HepG2 (cell line): ENCODE measurements at regions of chr11 and their contacts with region 1.

Region 1: GRCh38 chr11:67658691-67659271 is 8.3 kb upstream of the ACY3 start:
- DNase-seq: no peak
- ATAC-seq: no peak
- H3K4me3 ChIP-seq: no peak overlapping the region
- H3K27ac ChIP-seq: no peak overlapping the region
- H3K4me1 ChIP-seq: peaks cover 20% of the 10 kb centered on the region
- H3K27me3 ChIP-seq: peaks cover 0 to 11% of the 10 kb centered on the region in 2 experiments; a peak in 2 of 5 replicates
- CTCF ChIP-seq: no peak
- EP300 ChIP-seq: no peak
- POLR2A ChIP-seq: no peak
- RAD21 ChIP-seq: no peak

Region 2: DNA sequence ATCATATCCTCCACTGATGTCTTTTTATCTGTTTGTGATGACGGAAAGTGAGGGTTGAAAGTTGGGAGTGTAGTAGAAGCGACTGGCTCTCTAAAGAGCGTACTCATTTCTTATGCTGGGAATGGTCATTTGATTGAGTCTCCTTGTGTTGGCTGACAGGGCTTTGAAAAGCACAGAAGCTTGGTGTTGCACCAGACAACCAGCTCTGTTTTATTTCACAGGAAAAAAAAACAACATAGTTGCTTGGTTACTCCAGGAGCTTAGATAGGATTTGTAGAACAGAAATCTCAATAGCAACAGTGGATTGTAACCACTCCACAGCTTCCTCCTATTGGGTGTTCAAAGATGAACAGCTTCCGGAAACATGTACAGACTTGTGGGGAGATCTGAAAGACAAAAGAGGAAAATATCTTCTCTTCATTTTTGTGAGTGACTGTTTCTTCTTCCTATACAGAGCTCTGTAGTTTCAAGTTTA is 1039.7 kb before region 1 on chr11:
- CTCF ChIA-PET with region 1: no interaction called
- POLR2A ChIA-PET with region 1: no interaction called
- in situ Hi-C with region 1: no loop called
- intact Hi-C with region 1: no loop called
- DNase-seq: no peak
- ATAC-seq: no peak
- H3K4me3 ChIP-seq: peak overlapping the region; percentile 89 to 93 (median 92); a peak in 5 of 6 replicates
- H3K27ac ChIP-seq: peak overlapping the region; percentile 89
- H3K4me1 ChIP-seq: peaks cover 66% of the 10 kb centered on the region
- H3K27me3 ChIP-seq: no peaks in the 10 kb centered on the region; a peak in 1 of 5 replicates
- CTCF ChIP-seq: no peak
- EP300 ChIP-seq: no peak
- POLR2A ChIP-seq: peak in 1 of 2 experiments; percentile 48; a peak in 1 of 4 replicates
- RAD21 ChIP-seq: no peak

Region 3: DNA sequence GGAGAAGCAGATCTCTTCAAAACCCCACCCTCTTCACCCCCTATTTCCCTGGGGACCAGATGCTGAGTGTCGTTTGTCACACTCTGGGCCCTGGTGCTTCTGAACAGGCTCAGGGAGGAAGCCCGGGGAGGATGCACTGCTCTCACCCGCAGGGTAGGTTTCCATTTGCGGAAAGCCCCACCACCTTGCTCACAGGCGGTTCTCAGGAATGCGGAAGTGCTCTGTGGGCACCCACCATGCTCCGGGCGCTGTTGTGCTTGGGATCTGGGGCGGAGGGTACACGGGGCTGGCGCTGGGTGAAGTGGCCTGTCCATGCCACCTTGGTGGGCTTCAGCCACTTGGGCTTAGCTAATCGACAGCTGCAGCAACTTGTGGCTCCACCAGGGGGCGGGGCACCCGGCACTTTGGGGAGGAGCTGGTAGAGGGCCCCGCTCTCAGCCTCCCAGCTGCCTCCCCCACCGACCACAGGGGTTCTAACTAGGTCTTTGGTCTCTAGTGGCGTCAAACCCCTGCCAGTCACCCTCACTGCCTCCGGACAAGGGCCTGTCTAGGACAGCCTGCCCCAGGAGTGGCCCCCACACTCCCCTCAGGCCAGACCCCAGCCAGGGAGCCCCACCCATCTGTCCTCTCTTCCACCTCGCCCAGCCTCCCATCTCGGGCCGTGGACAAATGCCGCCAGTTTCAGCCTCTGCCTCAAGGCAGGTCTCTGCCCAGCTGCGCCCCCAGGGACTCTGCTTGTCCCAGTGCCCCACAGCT is 44.6 kb before region 1 on chr11:
- CTCF ChIA-PET with region 1: interaction called, 20 read pairs
- POLR2A ChIA-PET with region 1: no interaction called
- in situ Hi-C with region 1: no loop called
- intact Hi-C with region 1: loop called (anchors 1 kb)
- DNase-seq: no peak
- ATAC-seq: peak; percentile 59
- H3K4me3 ChIP-seq: no peak overlapping the region
- H3K27ac ChIP-seq: peak overlapping the region; percentile 28
- H3K4me1 ChIP-seq: peaks cover 45% of the 10 kb centered on the region
- H3K27me3 ChIP-seq: no peaks in the 10 kb centered on the region
- CTCF ChIP-seq: peak; percentile 80
- EP300 ChIP-seq: no peak
- POLR2A ChIP-seq: no peak
- RAD21 ChIP-seq: peak; percentile 64

Region 4: DNA sequence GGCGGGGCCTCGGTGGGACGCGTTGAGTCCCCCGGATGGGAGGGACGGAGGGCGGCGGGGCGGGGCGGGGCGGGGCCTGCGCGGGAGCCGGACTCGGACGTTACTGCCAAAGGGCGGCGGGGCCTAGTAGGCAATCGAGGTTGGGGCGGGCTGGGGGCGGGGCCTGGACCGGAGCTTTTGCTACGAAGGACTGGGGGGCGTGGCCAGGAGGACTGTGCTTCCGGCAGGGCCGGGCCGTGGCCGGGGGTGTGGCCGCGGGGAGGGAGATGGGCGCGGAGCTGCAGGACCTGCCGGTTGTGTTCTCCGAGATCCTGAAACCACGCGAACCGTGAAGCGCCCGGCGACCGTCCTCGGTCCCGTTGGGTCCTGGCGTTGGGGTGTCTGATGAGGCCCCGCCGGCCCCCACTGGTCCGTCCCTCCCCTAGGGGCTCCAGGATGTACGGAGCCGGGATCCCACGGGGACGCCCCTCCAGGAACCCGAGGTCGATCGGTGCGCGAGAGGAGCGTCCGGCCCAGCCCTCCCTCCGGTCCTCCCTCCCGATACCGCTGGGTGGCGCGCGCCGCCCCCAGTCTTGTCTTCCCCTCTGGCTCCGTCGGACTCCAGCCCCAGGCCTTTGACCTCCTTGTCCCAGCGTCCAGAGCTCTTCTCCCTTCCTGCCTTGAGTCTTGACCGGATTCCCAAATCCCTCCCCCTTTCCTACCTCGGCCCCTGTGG is 28.4 kb before region 1 on chr11:
- CTCF ChIA-PET with region 1: interaction called, 13 read pairs
- POLR2A ChIA-PET with region 1: interaction called, 13 read pairs
- in situ Hi-C with region 1: no loop called
- intact Hi-C with region 1: loop called (anchors 1 kb)
- DNase-seq: peak; percentile 92
- ATAC-seq: peak; percentile 67
- H3K4me3 ChIP-seq: peak overlapping the region; percentile 49 to 86 (median 71)
- H3K27ac ChIP-seq: peak overlapping the region; percentile 84
- H3K4me1 ChIP-seq: peaks cover 64% of the 10 kb centered on the region
- H3K27me3 ChIP-seq: no peaks in the 10 kb centered on the region; a peak in 2 of 5 replicates
- CTCF ChIP-seq: peak; percentile 97
- EP300 ChIP-seq: 0 out of 4 replicates have a peak, but pooled peaks of 1 of the 2 experiments have one; percentile 41
- POLR2A ChIP-seq: peak in 1 of 2 experiments; percentile 65; a peak in 2 of 4 replicates
- RAD21 ChIP-seq: peak; percentile 84; the same call in 1 of the 2 replicates

Region 5: DNA sequence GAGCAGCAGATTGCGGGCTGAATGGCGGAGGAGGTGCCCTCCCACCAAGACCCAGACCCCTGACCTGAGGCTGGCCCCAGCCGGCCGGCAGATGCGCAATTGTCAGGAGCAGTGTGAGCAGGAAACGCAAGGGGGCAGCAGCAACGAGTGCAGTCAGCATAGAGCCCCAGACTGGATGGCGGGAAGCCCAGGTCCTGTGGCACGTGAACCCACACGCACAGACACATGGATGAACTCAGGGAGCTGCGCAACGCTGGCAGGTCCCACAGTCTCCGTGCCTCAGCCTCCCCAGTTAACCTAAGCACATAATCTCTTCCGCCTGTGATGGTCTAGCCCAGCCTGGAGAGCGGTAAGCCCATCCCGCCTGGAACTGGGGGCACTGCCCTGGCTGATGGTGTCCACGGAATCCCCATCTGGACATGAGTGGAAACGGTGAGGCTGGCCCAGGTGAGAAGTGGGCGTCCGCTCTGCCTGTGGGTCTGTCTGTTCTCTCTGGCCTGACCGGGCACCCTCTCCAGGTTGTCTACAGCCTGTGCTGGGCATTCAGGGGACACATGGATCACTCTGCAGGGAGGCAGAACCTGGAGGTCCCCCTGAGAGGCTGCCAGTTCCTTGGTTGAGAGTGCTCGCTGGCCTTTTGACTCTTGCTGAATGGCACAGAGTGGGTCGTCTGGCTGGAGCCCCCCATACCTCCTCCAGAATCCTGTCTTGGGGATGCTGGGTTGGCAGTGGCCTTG is 18.6 kb before region 1 on chr11:
- CTCF ChIA-PET with region 1: interaction called, 12 read pairs
- POLR2A ChIA-PET with region 1: no interaction called
- in situ Hi-C with region 1: no loop called
- intact Hi-C with region 1: loop called (anchors 2 kb)
- DNase-seq: peak; percentile 55
- ATAC-seq: peak; percentile 84
- H3K4me3 ChIP-seq: no peak overlapping the region
- H3K27ac ChIP-seq: no peak overlapping the region
- H3K4me1 ChIP-seq: peaks cover 17% of the 10 kb centered on the region
- H3K27me3 ChIP-seq: peaks cover 0 to 9% of the 10 kb centered on the region in 2 experiments; a peak in 3 of 5 replicates
- CTCF ChIP-seq: peak; percentile 84
- EP300 ChIP-seq: no peak
- POLR2A ChIP-seq: no peak
- RAD21 ChIP-seq: peak; percentile 65

Region 6: DNA sequence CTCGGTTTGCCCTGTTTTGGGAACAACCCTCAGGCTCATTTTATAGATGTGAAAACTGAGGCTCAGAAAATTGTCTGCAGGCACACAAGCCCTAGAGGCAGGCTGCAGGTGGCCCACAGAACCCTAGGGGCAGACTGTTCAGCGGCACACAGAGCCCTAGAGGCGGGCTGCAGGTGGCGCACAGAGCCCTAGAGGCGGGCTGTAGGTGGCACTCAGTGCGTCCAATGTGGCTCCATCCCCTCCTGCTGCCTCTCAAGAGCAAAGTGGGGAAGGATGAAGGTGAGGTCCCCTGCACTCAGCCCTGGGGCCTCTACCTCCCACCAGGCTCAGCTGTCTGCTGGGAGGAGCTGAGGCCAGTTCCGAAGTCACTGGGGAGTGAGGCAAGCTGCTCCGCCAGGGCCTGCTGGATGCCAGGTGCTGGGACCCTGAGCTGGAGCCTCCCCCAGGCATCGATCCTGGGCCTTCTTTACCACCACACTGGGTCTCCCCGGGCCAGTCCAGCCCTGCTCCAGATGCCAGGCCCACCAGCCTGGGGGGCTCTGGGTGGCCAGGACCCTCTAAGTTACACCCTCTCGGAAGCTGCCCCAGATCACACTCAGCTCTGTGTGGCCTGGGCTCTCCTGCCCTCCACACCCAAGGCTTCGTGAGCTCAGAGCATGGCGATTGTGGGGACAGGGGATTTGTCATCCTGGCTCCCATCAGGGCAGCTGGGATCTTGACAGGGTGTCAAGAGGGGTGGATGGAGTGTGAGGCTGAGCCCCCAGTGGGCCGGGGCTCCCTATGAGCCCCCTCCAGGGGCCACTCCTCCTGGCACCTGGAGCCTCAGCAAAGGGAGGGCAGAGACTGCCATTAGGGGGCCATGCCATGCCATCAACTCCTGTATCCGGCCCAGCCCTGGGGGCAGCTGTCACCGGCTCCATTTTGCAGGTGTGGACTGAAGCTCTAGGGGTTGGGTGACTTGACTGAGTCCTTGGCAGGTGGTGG is 10.3 kb before region 1 on chr11:
- CTCF ChIA-PET with region 1: interaction called, 19 read pairs
- POLR2A ChIA-PET with region 1: no interaction called
- in situ Hi-C with region 1: no loop called
- intact Hi-C with region 1: loop called (anchors 1 kb)
- DNase-seq: peak; percentile 56
- ATAC-seq: peak; percentile 99
- H3K4me3 ChIP-seq: no peak overlapping the region
- H3K27ac ChIP-seq: no peak overlapping the region
- H3K4me1 ChIP-seq: peaks cover 26% of the 10 kb centered on the region
- H3K27me3 ChIP-seq: no peaks in the 10 kb centered on the region
- CTCF ChIP-seq: peak; percentile 81
- EP300 ChIP-seq: no peak
- POLR2A ChIP-seq: no peak
- RAD21 ChIP-seq: peak; percentile 79